Body of pancreas (tissue), 4 donors: ENCODE measurements at regions of chr20 and their contacts with region 1.

Region 1: DNA sequence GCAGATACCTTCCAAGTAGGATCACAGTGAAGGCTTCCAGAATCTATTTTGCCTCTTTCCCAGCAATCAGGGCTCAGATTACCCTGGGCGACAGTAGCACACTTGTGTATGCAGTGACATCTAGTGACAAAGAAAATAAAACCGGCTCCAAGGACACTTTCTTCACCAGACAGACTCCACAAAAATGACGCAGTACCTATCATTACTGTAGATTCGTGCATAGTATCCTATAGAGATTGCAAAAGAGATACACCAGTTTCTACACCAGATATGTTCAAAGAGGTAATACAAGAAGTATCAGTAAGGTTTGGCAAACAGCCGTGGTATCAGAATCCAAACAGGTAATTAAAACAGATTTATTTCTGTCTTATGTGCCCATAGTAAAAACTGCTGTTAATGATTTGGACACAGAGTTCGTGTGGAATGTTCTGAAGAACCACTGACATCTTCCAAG is 600.4 kb upstream of the JAG1 start:
- DNase-seq: peak; percentile 36 to 54 (median 47)
- ATAC-seq: peak; percentile 88
- H3K4me3 ChIP-seq: no peak overlapping the region
- H3K27ac ChIP-seq: no peak overlapping the region
- H3K4me1 ChIP-seq: peaks cover 9% of the 10 kb centered on the region
- H3K27me3 ChIP-seq: no peaks in the 10 kb centered on the region
- CTCF ChIP-seq: peak; percentile 45 to 82 (median 75)
- POLR2A ChIP-seq: no peak

Region 2: GRCh38 chr20:10667077-10667401 is 607.1 kb before region 1 on chr20:
- intact Hi-C with region 1: loop called (anchors 10 kb)
- DNase-seq: peak in 3 of 4 donors; percentile 38 to 65 (median 63)
- ATAC-seq: no peak
- H3K4me3 ChIP-seq: no peak overlapping the region
- H3K27ac ChIP-seq: peak overlapping the region; percentile 65 to 76 (median 73)
- H3K4me1 ChIP-seq: peaks cover 94% of the 10 kb centered on the region
- H3K27me3 ChIP-seq: no peaks in the 10 kb centered on the region
- CTCF ChIP-seq: no peak
- POLR2A ChIP-seq: no peak

Region 3: GRCh38 chr20:11432407-11432806 is 158.2 kb after region 1 on chr20:
- intact Hi-C with region 1: no loop called
- DNase-seq: no peak
- ATAC-seq: no peak
- H3K4me3 ChIP-seq: no peak overlapping the region
- H3K27ac ChIP-seq: no peak overlapping the region
- H3K4me1 ChIP-seq: no peaks in the 10 kb centered on the region
- H3K27me3 ChIP-seq: no peaks in the 10 kb centered on the region
- CTCF ChIP-seq: no peak
- POLR2A ChIP-seq: no peak